Ovary (tissue), 10 donors: ENCODE measurements at regions of chr18 and their contacts with region 1.

Region 1: DNA sequence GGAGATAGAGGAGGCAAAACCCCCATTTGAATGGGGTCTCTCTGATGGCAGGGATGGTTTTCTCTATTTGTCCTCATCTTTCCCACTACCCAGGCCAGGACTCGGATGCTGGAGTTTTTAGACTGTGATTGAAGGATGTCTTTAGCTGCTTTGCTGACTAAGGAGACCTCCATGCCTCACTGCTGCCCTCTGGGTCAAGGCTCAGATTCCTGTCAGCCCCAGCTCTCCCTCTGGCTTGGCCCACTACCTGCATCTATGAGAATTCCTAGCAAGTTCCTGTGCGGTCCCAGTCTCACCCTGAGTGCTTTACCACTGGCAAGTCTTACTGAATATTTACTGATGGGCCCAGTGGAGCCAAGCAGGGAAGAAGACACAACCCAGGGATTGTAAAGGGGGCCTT is 184.0 kb downstream of the CELF4 start:
- DNase-seq: no peak
- H3K4me3 ChIP-seq: no peak overlapping the region
- H3K27ac ChIP-seq: no peak overlapping the region
- H3K4me1 ChIP-seq: no peaks in the 10 kb centered on the region
- H3K27me3 ChIP-seq: no peaks in the 10 kb centered on the region
- CTCF ChIP-seq: no peak
- EP300 ChIP-seq: no peak
- POLR2A ChIP-seq: no peak

Region 2: GRCh38 chr18:36963464-36963863 is 418.1 kb before region 1 on chr18:
- intact Hi-C with region 1: no loop called
- DNase-seq: no peak
- H3K4me3 ChIP-seq: no peak overlapping the region
- H3K27ac ChIP-seq: no peak overlapping the region
- H3K4me1 ChIP-seq: no peaks in the 10 kb centered on the region
- H3K27me3 ChIP-seq: no peaks in the 10 kb centered on the region
- CTCF ChIP-seq: no peak
- EP300 ChIP-seq: no peak
- POLR2A ChIP-seq: no peak

Region 3: GRCh38 chr18:37440206-37440605 is 58.7 kb after region 1 on chr18:
- intact Hi-C with region 1: loop called in 1 of 4 experiments (anchors 2 kb)
- DNase-seq: peak in 2 of 5 donors; percentile 31 to 53
- H3K4me3 ChIP-seq: no peak overlapping the region
- H3K27ac ChIP-seq: no peak overlapping the region
- H3K4me1 ChIP-seq: peaks cover 5% of the 10 kb centered on the region
- H3K27me3 ChIP-seq: no peaks in the 10 kb centered on the region
- CTCF ChIP-seq: no peak
- EP300 ChIP-seq: no peak
- POLR2A ChIP-seq: no peak

Region 4: DNA sequence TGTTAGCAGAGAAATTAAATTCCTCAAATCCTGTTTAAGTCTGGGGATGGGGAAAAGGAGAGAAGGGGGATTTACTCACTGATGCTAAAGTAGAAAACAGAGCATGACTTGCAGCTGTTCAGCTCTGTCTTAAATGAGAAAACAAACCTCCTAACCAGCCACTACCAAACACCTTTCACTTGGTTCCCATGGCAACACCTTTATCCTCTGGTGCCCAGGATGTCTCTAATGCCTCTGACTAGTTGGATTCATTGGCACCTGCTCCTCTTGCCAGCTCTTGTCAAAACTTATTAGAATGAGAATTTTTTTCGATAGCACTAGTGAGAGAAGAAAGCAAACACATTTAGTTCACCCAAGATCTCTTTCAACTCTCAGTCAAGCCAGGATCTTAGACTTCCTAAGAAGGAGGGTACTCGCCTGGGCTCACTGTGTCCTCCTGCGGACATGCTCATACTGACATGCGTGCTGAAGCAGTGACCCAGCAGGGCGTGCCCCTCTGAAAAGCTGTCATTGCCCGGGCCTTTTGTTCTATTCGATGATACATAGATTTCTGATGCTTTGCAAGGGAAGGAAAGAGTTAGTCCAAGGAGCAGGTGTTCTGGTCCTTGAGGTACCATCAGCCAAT is 840.0 kb after region 1 on chr18:
- intact Hi-C with region 1: no loop called
- DNase-seq: no peak
- H3K4me3 ChIP-seq: no peak overlapping the region
- H3K27ac ChIP-seq: no peak overlapping the region
- H3K4me1 ChIP-seq: no peaks in the 10 kb centered on the region
- H3K27me3 ChIP-seq: no peaks in the 10 kb centered on the region
- CTCF ChIP-seq: no peak
- EP300 ChIP-seq: no peak
- POLR2A ChIP-seq: no peak